HepG2 (cell line): ENCODE measurements at regions of chr6 and their contacts with region 1.

Region 1: GRCh38 chr6:144534180-144534579 is 249.0 kb downstream of the UTRN start:
- DNase-seq: no peak
- ATAC-seq: 0 out of 3 replicates have a peak, but pooled peaks have one; percentile 23
- H3K4me3 ChIP-seq: no peak overlapping the region
- H3K27ac ChIP-seq: no peak overlapping the region
- H3K4me1 ChIP-seq: no peaks in the 10 kb centered on the region
- H3K27me3 ChIP-seq: no peaks in the 10 kb centered on the region
- CTCF ChIP-seq: no peak
- EP300 ChIP-seq: no peak
- POLR2A ChIP-seq: no peak
- RAD21 ChIP-seq: no peak

Region 2: DNA sequence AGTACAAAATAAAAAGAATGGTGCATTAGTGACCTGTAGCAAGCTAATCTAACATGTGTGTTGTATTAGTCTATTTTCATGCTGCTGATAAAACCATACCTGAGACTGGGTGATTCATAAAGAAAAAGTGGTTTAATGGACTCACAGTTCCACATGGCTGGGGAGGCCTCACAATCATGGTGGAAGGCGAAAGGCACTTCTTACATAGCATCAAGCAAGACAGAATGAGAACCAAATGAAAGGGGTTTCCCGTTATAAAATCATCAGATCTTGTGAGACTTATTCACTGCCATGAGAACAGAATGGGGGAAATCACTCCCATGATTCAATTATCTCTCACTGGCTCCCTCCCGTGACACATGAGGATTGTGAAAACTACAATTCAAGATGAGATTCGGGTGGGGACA is 1518.9 kb before region 1 on chr6:
- CTCF ChIA-PET with region 1: no interaction called
- POLR2A ChIA-PET with region 1: no interaction called
- in situ Hi-C with region 1: no loop called
- intact Hi-C with region 1: loop called (anchors 5 kb)
- DNase-seq: no peak
- ATAC-seq: no peak
- H3K4me3 ChIP-seq: no peak overlapping the region
- H3K27ac ChIP-seq: no peak overlapping the region
- H3K4me1 ChIP-seq: no peaks in the 10 kb centered on the region
- H3K27me3 ChIP-seq: no peaks in the 10 kb centered on the region
- CTCF ChIP-seq: no peak
- EP300 ChIP-seq: no peak
- POLR2A ChIP-seq: no peak
- RAD21 ChIP-seq: no peak